GM23248 (cell line): ENCODE measurements at regions of chr15 and their contacts with region 1.

Region 1: DNA sequence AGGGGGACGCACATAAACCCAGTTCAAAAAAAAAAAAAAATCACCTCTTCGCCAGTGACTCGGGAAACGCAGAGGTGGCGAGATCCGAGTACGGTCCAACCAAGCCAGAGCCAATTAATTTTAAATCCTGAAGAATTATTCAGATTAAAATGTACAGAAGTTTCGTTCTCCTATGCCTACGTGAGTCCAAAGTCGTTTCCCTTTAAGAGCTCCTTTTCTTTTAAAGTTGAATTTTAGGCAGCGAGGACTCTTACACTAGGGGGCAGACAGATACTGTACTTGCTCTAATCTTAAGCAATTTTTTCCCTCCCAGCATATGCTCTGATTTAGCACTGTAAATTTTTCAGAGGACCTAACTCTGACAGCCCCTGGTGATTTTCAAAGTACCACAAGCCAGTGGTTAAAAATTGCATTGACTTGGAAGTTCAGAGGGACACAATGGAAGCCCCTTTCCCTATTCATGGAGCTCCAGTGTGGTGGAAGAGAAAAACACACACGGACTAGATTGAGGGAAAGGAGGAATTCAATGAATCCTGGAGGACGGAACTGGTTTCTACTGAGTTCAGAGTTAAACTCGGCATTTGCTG is 3.3 kb upstream of the NR2F2 start:
- DNase-seq: peak; percentile 94
- H3K4me3 ChIP-seq: peak overlapping the region; percentile 80
- H3K27ac ChIP-seq: peak overlapping the region; percentile 87
- H3K4me1 ChIP-seq: peaks cover 32% of the 10 kb centered on the region
- H3K27me3 ChIP-seq: no peaks in the 10 kb centered on the region

Region 2: GRCh38 chr15:95025924-95026728 is 1301.1 kb before region 1 on chr15:
- in situ Hi-C with region 1: loop called (anchors 10 kb)
- DNase-seq: peak; percentile 76
- H3K4me3 ChIP-seq: no peak overlapping the region
- H3K27ac ChIP-seq: no peak overlapping the region
- H3K4me1 ChIP-seq: no peaks in the 10 kb centered on the region
- H3K27me3 ChIP-seq: no peaks in the 10 kb centered on the region